Caco-2 (cell line): ENCODE measurements at regions of chr18 and their contacts with region 1.

Region 1: GRCh38 chr18:77054606-77055428 is 77.8 kb downstream of the MBP start:
- DNase-seq: peak; percentile 75 to 85
- H3K4me3 ChIP-seq: no peak overlapping the region
- H3K4me3 Mint-ChIP-seq: peak overlapping the region; percentile 39
- H3K27ac Mint-ChIP-seq: peak overlapping the region; percentile 94
- H3K4me1 ChIP-seq: peaks cover 28% of the 10 kb centered on the region
- H3K4me1 Mint-ChIP-seq: peaks cover 11% of the 10 kb centered on the region
- H3K27me3 ChIP-seq: no peaks in the 10 kb centered on the region
- H3K27me3 Mint-ChIP-seq: no peaks in the 10 kb centered on the region
- CTCF ChIP-seq: peak; percentile 39 to 69

Region 2: DNA sequence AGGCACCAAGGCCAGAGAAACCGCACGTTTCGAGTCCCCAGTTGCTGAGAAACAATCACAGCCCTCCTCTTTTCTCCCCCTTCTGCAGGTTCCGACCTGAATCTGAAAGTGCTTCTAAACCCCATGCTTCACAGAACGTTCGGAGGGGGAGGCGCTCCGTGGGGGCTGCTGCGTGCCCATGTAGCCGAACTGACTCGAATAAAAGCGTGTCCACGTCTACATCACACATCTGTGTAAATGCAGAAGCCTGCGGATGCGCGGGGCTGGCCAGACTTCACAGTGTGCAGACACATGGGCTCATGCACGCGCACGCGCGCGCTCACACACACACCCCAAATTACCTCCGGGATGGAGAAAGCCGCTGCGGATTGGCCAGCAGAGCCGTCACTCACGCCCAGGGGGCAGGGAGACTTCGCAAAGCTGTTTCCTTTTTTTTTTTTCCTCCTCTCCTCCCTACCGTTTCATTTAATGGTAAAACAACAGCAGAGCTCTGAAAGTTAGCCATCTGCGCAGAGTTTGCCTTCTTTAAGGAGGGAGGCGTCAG is 562.1 kb before region 1 on chr18:
- CTCF ChIA-PET with region 1: no interaction called
- POLR2A ChIA-PET with region 1: interaction called, 4 read pairs
- intact Hi-C with region 1: loop called (anchors 5 kb)
- DNase-seq: peak; percentile 96 to 97
- H3K4me3 ChIP-seq: peak overlapping the region; percentile 63
- H3K4me3 Mint-ChIP-seq: peak overlapping the region; percentile 78
- H3K27ac Mint-ChIP-seq: peak overlapping the region; percentile 65
- H3K4me1 ChIP-seq: no peaks in the 10 kb centered on the region
- H3K4me1 Mint-ChIP-seq: no peaks in the 10 kb centered on the region
- H3K27me3 ChIP-seq: no peaks in the 10 kb centered on the region
- H3K27me3 Mint-ChIP-seq: no peaks in the 10 kb centered on the region
- CTCF ChIP-seq: no peak

Region 3: DNA sequence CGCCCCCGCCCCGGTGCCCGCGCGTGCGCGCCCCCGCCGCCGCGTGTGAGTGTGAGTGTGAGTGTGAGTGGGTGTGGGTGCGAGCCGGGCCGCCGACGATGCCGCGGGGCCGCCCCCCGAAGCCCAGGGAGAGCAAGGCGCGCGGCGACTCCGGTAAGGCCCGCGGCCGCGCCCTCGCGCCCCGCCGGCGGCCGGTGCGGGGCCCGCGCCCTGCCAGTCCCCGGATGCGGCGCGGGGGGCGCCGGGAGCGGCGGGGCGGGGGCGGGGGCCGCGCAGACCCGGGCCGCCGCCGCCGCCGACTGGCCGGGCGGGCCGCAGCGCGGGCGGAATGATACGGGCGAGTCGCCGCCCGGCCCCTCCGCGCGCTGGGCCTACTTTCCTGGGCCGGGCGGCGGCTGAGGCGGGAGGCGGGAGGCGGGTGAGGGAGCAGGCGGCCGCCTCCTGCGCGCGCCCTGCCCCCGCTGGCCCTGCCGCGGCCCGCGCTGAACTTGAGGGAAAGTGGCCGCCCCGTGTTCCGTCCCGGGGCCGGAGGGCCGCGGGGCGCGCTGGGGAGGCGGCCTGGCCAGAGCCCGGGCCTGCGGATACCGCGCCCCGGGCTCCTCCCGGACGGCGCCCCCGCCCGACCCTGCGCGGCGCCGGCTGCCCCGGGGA is 232.2 kb before region 1 on chr18 and contains the start of gene ZNF236:
- CTCF ChIA-PET with region 1: no interaction called
- POLR2A ChIA-PET with region 1: no interaction called
- intact Hi-C with region 1: loop called (anchors 5 kb)
- DNase-seq: peak; percentile 42 to 68
- H3K4me3 ChIP-seq: peak within 1 kb of the TSS; percentile 84
- H3K4me3 Mint-ChIP-seq: peak within 1 kb of the TSS; percentile 80
- H3K27ac Mint-ChIP-seq: peak within 1 kb of the TSS; percentile 59
- H3K4me1 ChIP-seq: no peaks in the 10 kb centered on the region
- H3K4me1 Mint-ChIP-seq: no peaks in the 10 kb centered on the region
- H3K27me3 ChIP-seq: no peaks in the 10 kb centered on the region
- H3K27me3 Mint-ChIP-seq: no peaks in the 10 kb centered on the region
- CTCF ChIP-seq: no peak
- total RNA-seq, gene ZNF236: 13.7 and 14.9 TPM in 2 replicates

Region 4: DNA sequence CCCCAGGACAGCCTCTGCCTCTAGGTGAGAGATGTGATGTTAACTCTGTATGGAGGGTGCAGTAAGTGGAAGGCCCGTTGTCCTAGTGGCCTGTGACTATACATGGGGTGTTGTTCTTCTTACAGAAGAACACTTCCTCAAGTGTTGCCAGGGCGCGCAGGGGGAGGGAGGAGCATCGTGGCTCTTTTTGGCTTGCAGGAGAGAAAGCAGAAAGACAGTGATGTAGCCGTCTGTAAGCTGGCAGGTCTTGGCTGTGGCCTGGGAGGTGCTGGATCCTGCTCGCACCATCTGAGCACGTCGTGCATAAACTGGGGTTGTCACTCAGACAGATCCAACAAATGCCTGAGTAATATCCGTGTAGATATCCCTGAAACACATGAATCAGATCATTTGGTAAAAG is 188.2 kb before region 1 on chr18:
- CTCF ChIA-PET with region 1: no interaction called
- POLR2A ChIA-PET with region 1: no interaction called
- intact Hi-C with region 1: no loop called
- DNase-seq: no peak
- H3K4me3 ChIP-seq: no peak overlapping the region
- H3K4me3 Mint-ChIP-seq: no peak overlapping the region
- H3K27ac Mint-ChIP-seq: no peak overlapping the region
- H3K4me1 ChIP-seq: no peaks in the 10 kb centered on the region
- H3K4me1 Mint-ChIP-seq: no peaks in the 10 kb centered on the region
- H3K27me3 ChIP-seq: no peaks in the 10 kb centered on the region
- H3K27me3 Mint-ChIP-seq: no peaks in the 10 kb centered on the region
- CTCF ChIP-seq: no peak

Region 5: GRCh38 chr18:76982841-76983587 is 71.8 kb before region 1 on chr18:
- CTCF ChIA-PET with region 1: no interaction called
- POLR2A ChIA-PET with region 1: no interaction called
- intact Hi-C with region 1: loop called (anchors 5 kb)
- DNase-seq: peak; percentile 76 to 80
- H3K4me3 ChIP-seq: no peak overlapping the region
- H3K4me3 Mint-ChIP-seq: no peak overlapping the region
- H3K27ac Mint-ChIP-seq: no peak overlapping the region
- H3K4me1 ChIP-seq: no peaks in the 10 kb centered on the region
- H3K4me1 Mint-ChIP-seq: no peaks in the 10 kb centered on the region
- H3K27me3 ChIP-seq: no peaks in the 10 kb centered on the region
- H3K27me3 Mint-ChIP-seq: no peaks in the 10 kb centered on the region
- CTCF ChIP-seq: peak; percentile 57 to 70

Region 6: GRCh38 chr18:77023102-77023782 is 31.6 kb before region 1 on chr18:
- CTCF ChIA-PET with region 1: no interaction called
- POLR2A ChIA-PET with region 1: no interaction called
- intact Hi-C with region 1: no loop called
- DNase-seq: no peak
- H3K4me3 ChIP-seq: no peak overlapping the region
- H3K4me3 Mint-ChIP-seq: no peak overlapping the region
- H3K27ac Mint-ChIP-seq: no peak overlapping the region
- H3K4me1 ChIP-seq: no peaks in the 10 kb centered on the region
- H3K4me1 Mint-ChIP-seq: no peaks in the 10 kb centered on the region
- H3K27me3 ChIP-seq: no peaks in the 10 kb centered on the region
- H3K27me3 Mint-ChIP-seq: no peaks in the 10 kb centered on the region
- CTCF ChIP-seq: no peak

Region 7: GRCh38 chr18:77132371-77133050 is 77.7 kb after region 1 on chr18 and contains the start of gene MBP:
- CTCF ChIA-PET with region 1: interaction called, 3 read pairs
- POLR2A ChIA-PET with region 1: no interaction called
- intact Hi-C with region 1: loop called (anchors 5 kb)
- DNase-seq: peak; percentile 46 to 77
- H3K4me3 ChIP-seq: peak within 1 kb of the TSS; percentile 48
- H3K4me3 Mint-ChIP-seq: peak within 1 kb of the TSS; percentile 75
- H3K27ac Mint-ChIP-seq: no peak within 1 kb of the TSS
- H3K4me1 ChIP-seq: no peaks in the 10 kb centered on the region
- H3K4me1 Mint-ChIP-seq: no peaks in the 10 kb centered on the region
- H3K27me3 ChIP-seq: no peaks in the 10 kb centered on the region
- H3K27me3 Mint-ChIP-seq: no peaks in the 10 kb centered on the region
- CTCF ChIP-seq: no peak
- total RNA-seq, gene MBP: 7.9 and 11.4 TPM in 2 replicates